ENCODE measurements at regions of chr3 and their contacts with region 1.

Region 1: GRCh38 chr3:66033241-66034138 is 5.2 kb downstream of the MAGI1 start:
- DNase-seq: no peak
- H3K4me3 Mint-ChIP-seq: no peak overlapping the region
- H3K27ac Mint-ChIP-seq: peak overlapping the region; percentile 57
- H3K4me1 Mint-ChIP-seq: peaks cover 9% of the 10 kb centered on the region
- H3K27me3 Mint-ChIP-seq: peaks cover 28% of the 10 kb centered on the region

Region 2: DNA sequence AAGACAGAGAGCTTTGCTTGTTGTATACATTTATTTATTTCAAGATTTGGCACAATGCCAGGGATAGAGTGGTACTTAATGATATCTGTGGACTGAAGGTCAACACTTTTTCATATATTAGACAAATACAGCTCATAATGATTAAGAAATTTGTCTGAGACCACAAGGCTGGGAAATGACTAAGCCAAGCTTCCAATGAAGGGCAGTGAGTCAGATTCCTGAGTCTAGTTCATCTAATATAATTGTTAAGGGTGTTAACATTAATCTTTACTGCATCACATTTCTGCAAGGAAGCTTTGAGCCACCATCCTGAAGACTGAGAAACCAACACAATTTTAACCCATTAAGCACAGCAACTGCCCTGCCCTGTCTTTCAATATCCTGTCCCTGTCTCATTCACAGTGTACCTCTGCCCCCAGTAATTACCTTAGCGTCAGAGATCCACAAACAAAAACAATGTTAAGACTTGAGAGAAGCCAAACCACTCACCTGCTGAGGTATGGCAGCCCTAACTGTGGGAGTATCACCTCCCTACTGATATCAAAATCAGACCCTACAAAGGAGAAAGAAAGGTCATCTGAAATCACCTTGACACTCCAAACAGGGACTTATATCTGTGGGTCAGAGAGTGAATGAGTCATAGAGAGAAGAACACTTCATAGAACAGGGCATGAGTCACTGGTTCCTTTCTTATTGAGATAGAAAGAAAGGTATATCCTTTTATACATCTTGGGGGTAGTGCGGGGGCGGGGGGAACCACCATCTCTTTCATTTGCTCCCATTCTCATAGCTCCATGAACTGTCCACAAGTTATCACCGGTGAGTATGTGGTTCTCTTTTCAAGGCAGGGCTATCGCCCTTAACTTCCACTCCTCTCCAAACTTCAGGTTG is 69.5 kb before region 1 on chr3:
- intact Hi-C with region 1: loop called (anchors 1 kb)
- DNase-seq: no peak
- H3K4me3 Mint-ChIP-seq: peak overlapping the region; percentile 34
- H3K27ac Mint-ChIP-seq: peak overlapping the region; percentile 81
- H3K4me1 Mint-ChIP-seq: peaks cover 11% of the 10 kb centered on the region
- H3K27me3 Mint-ChIP-seq: no peaks in the 10 kb centered on the region

Measured in activated CD4-positive, alpha-beta T cell treated with anti-CD3 and anti-CD28 coated beads, Interleukin-2, amount 10 ng/mL, durations not matched to agents 24 days and 14 days (primary cell).